ENCODE measurements at regions of chr4 and their contacts with region 1.

Region 1: DNA sequence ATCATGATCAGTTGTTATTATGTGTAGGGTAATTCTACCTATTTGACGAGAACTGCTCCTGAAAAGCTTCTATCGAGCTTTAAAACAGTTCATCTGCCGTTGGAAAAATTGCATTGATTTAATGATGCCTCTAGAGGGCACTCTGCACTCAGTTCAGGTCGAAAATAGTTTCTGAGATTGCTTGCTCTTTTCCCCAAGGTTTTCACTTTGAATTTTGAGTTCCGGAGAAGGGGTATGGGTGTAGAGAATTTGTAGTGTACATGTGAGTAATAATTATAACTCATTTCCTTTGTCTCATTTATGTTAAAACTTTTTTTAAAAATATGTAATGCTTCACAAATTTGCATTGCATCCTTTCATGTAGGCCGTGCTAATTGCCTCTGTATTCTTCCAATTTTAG is 28.4 kb upstream of the TNIP3 start:
- DNase-seq: no peak
- ATAC-seq: no peak

Region 2: DNA sequence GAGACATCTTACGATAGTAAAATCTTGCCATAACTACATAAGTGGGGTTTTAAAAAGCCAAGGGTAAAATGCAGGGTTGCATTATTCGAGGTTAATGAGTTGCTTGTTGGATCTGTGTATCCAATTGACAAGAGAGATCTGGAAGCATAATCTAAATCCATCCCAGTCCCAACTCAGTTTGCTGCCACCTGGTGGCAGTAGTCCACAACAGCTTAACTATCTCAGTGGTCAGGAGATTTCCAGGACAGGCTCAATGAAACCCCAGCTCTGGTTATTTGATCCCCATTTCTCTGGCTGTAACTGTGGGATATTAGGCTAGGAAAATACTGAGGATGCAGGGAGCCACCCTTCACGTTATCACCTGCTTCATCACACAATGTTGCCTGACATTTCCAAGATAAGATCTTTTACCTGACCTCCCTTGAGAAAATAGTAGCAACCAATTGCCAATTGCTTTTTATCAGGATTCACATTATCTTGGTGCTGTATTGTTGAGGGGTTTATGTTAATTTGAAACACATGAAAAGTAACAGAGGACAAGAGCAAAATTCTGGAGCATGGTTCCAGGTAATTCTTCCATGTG is 59.8 kb after region 1 on chr4:
- intact Hi-C with region 1: loop called (anchors 1 kb)
- DNase-seq: peak; percentile 64
- ATAC-seq: peak; percentile 69

Measured in left ventricle myocardium superior (tissue), 1 donor.